ENCODE measurements at regions of chr15 and their contacts with region 1.

Region 1: GRCh38 chr15:57667171-57667849 is 39.2 kb upstream of the POLR2M start:
- DNase-seq: no peak

Region 2: GRCh38 chr15:57866149-57866736 is 198.9 kb after region 1 on chr15:
- intact Hi-C with region 1: loop called (anchors 10 kb)
- DNase-seq: peak in 2 of 10 donors; percentile 16 to 33